Caco-2 (cell line): ENCODE measurements at regions of chr7 and their contacts with region 1.

Region 1: DNA sequence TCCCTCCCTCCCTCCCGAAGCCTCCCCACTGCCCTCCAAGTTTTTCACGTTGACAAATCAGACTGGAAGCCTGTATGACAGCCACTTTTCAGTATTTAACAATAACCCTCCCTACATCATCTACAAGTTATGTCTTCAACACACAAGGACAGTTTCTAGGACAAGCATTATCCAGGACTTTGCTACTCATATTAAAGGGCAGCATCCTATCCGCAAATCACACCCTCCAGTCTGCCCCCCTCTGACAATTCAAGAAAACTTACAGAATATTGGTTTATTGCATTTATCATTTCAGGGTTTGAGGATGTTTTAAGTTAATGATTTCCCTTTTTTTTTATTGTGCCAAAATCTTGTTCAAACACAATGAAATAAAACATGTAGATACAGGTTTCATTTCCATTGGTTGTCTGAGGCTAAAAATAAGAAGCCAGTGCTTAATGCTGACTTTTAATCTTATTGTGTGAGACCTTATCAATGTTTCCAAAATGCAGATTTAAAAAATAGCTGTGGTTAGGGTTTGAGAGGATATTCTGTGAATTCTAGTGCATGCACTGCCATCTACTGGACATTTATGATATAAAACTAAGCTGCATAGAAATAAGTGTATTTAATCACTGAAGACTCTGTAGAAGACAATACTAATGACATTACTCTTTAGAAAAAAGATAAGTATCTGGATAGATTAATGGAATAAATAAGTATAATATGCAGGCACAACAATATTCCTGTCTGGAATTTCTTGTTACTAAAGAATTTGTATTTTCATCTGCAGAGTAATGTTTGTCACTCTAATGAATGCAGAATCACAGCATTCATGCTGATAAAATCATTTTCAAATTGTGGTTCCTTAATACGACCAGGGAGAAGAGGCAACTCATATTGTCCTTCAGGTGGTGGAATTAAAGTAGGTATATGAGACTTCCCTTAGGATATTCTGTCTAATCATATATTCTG is 64.1 kb downstream of the CAV1 start:
- DNase-seq: peak in 1 of 2 experiments; percentile 57
- H3K4me3 ChIP-seq: no peak overlapping the region
- H3K4me3 Mint-ChIP-seq: no peak overlapping the region
- H3K27ac Mint-ChIP-seq: peak overlapping the region; percentile 30
- H3K4me1 ChIP-seq: peaks cover 17% of the 10 kb centered on the region; the same call in 1 of the 2 replicates
- H3K4me1 Mint-ChIP-seq: peaks cover 22% of the 10 kb centered on the region
- H3K27me3 ChIP-seq: no peaks in the 10 kb centered on the region
- H3K27me3 Mint-ChIP-seq: no peaks in the 10 kb centered on the region
- CTCF ChIP-seq: peak; percentile 44 to 69

Region 2: DNA sequence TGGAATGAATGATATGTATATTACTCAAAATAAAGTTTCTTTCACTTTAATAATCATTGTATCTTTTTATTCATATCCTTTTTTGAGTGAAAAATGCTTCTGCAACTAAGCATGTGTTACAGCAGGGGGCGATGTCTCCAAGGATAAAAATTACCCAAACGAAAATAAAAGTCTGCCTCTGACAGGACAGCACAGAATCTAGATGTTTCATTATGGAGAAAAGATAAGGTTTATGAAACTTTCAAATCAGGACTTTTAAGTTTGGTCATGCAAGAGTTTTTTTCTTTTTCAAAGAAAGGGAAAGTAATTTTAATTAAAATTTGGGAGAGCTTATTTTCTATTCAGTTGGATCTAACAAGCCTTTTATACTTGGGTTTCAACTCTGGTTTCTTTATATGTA is 330.2 kb before region 1 on chr7:
- CTCF ChIA-PET with region 1: interaction called, 8 read pairs
- POLR2A ChIA-PET with region 1: no interaction called
- intact Hi-C with region 1: loop called (anchors 1 kb)
- DNase-seq: peak in 1 of 2 experiments; percentile 55
- H3K4me3 ChIP-seq: no peak overlapping the region
- H3K4me3 Mint-ChIP-seq: no peak overlapping the region
- H3K27ac Mint-ChIP-seq: no peak overlapping the region
- H3K4me1 ChIP-seq: peaks cover 12% of the 10 kb centered on the region
- H3K4me1 Mint-ChIP-seq: peaks cover 17% of the 10 kb centered on the region
- H3K27me3 ChIP-seq: no peaks in the 10 kb centered on the region
- H3K27me3 Mint-ChIP-seq: no peaks in the 10 kb centered on the region
- CTCF ChIP-seq: peak; percentile 72 to 83

Region 3: DNA sequence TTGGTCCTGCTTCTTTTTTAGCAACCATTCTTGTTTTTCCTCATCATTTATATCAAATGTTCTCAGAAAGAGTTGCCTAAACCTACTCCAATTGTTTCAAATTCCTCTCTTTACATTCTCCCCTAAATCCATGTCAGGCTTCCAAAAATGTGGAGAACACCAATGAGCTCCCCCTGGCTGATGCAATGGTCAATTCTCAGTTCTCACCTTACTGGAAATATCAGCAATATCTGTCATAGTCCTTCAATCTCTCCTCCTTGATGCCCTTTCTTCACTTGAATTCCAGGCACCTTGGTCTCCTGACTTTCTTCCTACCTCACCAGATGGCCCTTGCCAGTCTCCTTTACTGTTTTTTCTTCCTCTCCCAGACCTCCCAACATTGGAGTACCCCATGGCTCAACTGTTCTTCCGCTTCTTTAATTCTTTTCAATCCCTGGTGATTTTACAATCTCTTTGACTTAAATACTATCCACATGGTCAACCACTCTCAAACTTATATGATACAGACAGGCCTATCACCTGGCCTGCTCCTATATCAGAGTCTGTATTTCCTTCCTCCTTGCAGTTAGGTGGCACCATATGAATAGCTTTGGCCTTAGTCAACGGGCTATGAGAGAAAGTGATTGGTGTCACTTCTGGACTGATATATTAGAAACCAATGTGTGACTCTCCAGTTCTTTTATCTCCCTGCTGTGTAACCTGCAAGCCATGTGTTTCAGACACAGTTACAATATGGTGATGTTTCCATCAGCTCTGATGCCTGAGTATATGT is 136.8 kb before region 1 on chr7:
- CTCF ChIA-PET with region 1: no interaction called
- POLR2A ChIA-PET with region 1: no interaction called
- intact Hi-C with region 1: no loop called
- DNase-seq: no peak
- H3K4me3 ChIP-seq: no peak overlapping the region
- H3K4me3 Mint-ChIP-seq: no peak overlapping the region
- H3K27ac Mint-ChIP-seq: no peak overlapping the region
- H3K4me1 ChIP-seq: peaks cover 19% of the 10 kb centered on the region
- H3K4me1 Mint-ChIP-seq: peaks cover 7% of the 10 kb centered on the region
- H3K27me3 ChIP-seq: no peaks in the 10 kb centered on the region
- H3K27me3 Mint-ChIP-seq: no peaks in the 10 kb centered on the region
- CTCF ChIP-seq: peak in 1 of 2 experiments; percentile 21

Region 4: GRCh38 chr7:116525913-116526861 is 62.7 kb before region 1 on chr7:
- CTCF ChIA-PET with region 1: interaction called, 23 read pairs
- POLR2A ChIA-PET with region 1: no interaction called
- intact Hi-C with region 1: loop called (anchors 1 kb)
- DNase-seq: peak; percentile 75 to 88
- H3K4me3 ChIP-seq: peak overlapping the region; percentile 60
- H3K4me3 Mint-ChIP-seq: peak overlapping the region; percentile 94
- H3K27ac Mint-ChIP-seq: peak overlapping the region; percentile 52
- H3K4me1 ChIP-seq: peaks cover 10% of the 10 kb centered on the region; the same call in 1 of the 2 replicates
- H3K4me1 Mint-ChIP-seq: no peaks in the 10 kb centered on the region
- H3K27me3 ChIP-seq: no peaks in the 10 kb centered on the region
- H3K27me3 Mint-ChIP-seq: no peaks in the 10 kb centered on the region
- CTCF ChIP-seq: peak; percentile 66 to 91

Region 5: GRCh38 chr7:116671681-116672595 is 83.0 kb after region 1 on chr7 and contains the start of gene MET:
- CTCF ChIA-PET with region 1: no interaction called
- POLR2A ChIA-PET with region 1: no interaction called
- intact Hi-C with region 1: loop called (anchors 2 kb)
- DNase-seq: peak; percentile 91 to 92
- H3K4me3 ChIP-seq: peak within 1 kb of the TSS; percentile 84
- H3K4me3 Mint-ChIP-seq: peak within 1 kb of the TSS; percentile 94
- H3K27ac Mint-ChIP-seq: peak within 1 kb of the TSS; percentile 47
- H3K4me1 ChIP-seq: peaks cover 5% of the 10 kb centered on the region
- H3K4me1 Mint-ChIP-seq: peaks cover 13% of the 10 kb centered on the region
- H3K27me3 ChIP-seq: no peaks in the 10 kb centered on the region
- H3K27me3 Mint-ChIP-seq: no peaks in the 10 kb centered on the region
- CTCF ChIP-seq: peak; percentile 70 to 87
- total RNA-seq, gene MET: 72.6 and 82.9 TPM in 2 replicates